ENCODE measurements at regions of chr17 and their contacts with region 1.

Region 1: DNA sequence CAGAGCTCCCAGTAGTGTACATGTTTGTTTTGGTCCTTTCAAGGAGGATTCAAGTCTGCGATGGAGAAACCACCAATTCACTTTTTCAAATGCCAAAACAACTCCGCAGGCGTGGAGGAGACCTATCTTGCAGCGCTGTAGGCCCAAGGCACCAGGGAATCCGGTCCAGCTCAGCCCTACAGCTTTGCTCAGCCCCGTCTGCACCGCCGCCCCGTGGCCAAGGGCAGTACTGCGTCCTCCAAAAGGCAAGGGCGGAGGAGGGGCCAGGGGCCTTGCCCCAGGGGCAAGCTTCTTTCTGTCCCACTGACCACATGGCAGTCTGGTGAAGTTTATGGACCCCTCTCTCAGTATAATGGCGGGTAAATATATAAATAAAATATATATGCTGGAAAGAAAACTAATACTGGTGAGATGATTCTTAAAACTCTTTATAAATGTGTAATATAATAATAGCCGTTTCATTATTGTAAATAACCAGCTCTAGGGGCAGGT is 709 bp upstream of the CD300LG start:
- DNase-seq: peak; percentile 79 to 92 (median 84)
- H3K4me3 ChIP-seq: peak overlapping the region in 1 of 3 donors; percentile 5
- H3K27ac ChIP-seq: peak overlapping the region in 1 of 2 donors; percentile 48
- H3K4me1 ChIP-seq: peaks cover 3 to 5% (median 5%) of the 10 kb centered on the region in 3 donors
- H3K27me3 ChIP-seq: no peaks in the 10 kb centered on the region
- CTCF ChIP-seq: peak; percentile 97

Region 2: DNA sequence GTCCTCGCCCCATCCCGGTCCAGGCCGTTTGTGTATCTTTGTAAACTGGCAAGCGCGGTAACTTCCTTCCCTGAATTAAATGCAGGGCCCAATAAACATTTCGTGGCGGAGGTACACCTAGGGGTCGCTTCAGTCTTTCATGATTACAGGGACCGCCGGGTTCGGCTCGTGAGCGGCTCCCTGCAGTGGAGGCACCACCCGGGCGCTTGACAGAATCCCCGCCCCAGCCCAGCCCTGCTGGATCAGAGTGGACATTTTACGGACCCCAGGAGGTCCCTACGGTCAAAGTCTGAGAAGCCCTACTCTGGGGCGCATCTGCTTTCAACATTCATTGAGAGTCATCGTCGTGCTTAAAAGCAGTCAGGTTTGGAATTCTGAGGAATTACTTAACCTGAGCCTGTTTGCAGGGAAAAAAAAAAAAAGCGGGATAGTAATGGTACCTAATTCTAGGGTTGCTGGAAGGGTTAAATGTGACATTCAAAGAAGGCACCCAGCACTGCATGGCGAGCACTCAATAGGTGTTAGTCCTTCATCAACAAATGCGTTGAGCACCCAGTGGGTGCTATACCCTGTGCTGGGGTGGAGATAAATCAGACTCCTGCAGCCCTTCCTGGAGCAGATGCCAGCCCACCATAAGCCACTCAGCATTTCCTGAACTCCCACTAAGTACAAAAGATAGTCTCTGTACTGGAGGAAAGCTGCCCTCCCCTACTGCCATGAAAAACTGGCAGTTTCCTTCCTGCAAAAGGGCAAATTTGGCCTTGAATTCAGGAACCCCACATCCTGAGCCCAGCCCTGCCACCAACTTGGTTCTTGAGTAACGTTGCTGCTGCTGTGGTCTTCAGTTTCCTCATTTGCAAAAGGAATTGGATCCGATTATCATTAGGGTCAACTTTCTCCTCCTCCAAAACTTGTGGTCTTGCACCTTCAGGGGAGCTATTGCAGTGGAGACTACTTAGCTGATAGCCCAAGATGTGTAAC is 66.8 kb before region 1 on chr17:
- intact Hi-C with region 1: loop called (anchors 10 kb)
- DNase-seq: peak in 4 of 5 donors; percentile 75 to 84 (median 82)
- H3K4me3 ChIP-seq: peak overlapping the region; percentile 55 to 78 (median 69)
- H3K27ac ChIP-seq: peak overlapping the region; percentile 88 to 100
- H3K4me1 ChIP-seq: peaks cover 3 to 21% (median 13%) of the 10 kb centered on the region in 3 donors
- H3K27me3 ChIP-seq: peaks cover 4% of the 10 kb centered on the region
- CTCF ChIP-seq: no peak

Measured in kidney (tissue), 22 donors.